ENCODE measurements at regions of chr2 and their contacts with region 1.

Region 1: DNA sequence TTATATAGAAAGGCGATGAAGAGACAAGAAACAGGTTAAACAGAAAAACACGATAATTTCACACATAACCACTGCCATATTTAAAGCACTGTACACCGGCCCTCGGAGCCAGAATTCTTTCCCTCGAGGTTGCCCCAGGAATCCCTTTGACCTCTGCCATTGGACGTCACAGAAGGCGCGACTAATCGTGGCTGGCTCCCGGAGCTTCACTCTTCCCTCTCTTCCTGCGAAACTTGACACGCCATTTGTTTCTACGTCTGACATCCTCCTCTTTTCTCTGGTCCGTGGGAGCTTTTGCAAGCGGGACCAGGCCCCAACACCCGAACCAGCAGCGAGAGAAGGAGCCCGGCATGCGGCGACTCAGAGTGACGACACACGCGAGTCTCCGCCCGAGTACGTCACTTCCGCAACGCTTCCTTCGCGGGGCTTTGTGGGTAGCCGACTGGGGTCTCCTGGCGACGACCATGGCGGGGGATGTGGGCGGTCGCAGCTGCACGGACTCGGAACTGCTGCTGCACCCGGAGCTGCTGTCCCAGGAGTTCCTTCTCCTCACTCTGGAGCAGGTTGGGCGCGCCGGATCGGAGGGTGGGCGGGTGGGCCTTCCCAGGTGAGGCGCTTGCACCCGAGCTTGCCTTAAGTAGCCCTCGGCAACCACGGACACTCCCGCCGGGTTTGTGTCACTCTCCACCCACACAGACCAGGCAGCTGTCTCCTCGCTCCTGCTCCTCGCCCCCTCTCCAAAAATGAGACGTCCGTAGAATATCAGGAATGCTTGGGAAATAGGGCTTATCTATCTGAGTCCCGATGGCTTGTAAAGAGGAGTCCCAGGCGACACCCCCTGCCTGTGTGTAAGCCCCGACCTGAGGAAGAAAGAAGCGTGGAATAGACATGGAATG is at the start of gene C2orf49:
- DNase-seq: no peak
- H3K4me3 ChIP-seq: peak within 1 kb of the TSS; percentile 90
- CTCF ChIP-seq: no peak

Region 2: DNA sequence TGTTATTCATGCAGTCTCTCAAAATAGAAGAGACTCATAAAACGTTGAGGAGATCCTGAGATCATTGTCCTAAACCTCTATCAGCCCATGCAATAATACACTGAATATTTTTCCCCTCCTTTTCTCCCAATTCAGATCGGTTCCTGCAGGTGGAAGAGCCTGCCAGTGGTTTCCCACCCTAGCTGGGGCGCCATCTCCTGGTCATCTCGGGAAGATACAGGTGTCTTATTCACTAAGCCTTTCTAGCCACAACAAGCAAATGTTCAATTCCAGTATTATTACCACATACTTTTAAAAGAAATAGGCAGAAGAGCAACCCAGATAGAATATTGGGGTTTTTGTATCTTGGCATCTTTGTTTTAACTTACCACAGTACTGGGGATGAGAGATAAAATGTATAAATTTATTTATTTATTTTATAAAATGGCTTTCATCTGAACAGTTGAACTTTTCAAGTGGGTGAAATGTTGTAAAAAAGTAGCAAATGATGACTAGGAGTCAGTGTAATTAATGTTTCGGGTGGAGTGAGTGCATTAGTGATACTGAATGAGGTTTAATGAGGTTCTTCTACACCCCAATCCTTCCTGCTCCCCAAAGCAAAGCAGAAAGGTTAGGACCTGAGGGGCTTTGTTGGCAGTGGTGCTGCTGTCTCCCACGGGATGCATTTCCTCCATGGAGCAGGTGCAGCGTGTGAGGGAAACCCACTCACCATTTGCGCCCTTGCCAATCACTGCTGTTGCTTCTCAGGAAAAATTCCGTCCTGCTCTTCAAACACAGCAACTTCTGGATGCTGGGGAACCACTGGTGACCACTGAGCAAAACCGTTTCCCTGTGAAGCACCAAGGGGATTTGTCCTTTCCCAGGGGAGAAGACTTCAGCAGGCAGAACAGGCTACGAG is 208.6 kb after region 1 on chr2:
- CTCF ChIA-PET with region 1: interaction called, 224 read pairs
- POLR2A ChIA-PET with region 1: no interaction called
- DNase-seq: no peak
- H3K4me3 ChIP-seq: no peak overlapping the region
- CTCF ChIP-seq: peak; percentile 77